ENCODE measurements at regions of chr14 and their contacts with region 1.

Region 1: DNA sequence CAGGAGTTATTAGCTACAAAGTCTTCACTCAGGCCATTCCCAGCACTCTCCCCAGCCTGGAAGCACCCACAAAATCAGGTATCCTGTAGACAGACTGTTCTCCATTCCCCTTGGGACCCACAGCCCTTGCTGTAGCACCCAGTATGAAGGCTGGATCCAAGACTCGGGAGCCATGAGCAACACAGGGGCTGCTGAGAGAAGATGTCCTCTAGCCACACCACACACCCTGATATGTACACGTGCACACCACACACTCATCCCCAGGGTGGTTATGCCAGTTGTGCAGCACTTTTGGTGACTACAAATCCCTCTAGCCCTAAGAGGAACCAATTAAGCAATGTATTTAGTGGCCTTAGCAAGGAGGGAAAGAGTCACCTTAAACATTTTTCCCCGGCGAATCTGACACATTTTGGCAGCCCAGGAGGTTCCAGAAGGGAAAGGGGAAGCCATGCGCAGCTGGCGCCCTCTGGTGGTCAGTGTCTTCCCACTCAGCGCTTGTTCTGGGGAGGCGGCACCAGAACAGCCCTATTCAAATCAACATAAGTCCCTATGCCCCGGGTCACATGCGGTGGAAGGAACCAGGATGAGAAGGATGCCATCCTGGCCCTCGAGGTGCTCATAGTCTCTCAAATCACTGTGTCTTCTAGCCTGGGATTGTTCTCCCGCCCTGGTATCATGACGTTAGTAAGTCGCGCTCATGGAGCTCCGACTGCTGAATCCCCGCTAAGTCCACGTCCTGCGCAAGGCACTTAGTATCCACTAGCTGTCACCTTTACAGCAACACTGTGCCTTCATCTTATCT is 96.9 kb downstream of the GCH1 start:
- DNase-seq: peak; percentile 93
- ATAC-seq: peak; percentile 85
- H3K4me3 Mint-ChIP-seq: no peak overlapping the region
- H3K27ac Mint-ChIP-seq: no peak overlapping the region
- H3K4me1 Mint-ChIP-seq: peaks cover 21% of the 10 kb centered on the region
- H3K27me3 Mint-ChIP-seq: peaks cover 9% of the 10 kb centered on the region
- CTCF ChIP-seq: peak; percentile 95

Region 2: DNA sequence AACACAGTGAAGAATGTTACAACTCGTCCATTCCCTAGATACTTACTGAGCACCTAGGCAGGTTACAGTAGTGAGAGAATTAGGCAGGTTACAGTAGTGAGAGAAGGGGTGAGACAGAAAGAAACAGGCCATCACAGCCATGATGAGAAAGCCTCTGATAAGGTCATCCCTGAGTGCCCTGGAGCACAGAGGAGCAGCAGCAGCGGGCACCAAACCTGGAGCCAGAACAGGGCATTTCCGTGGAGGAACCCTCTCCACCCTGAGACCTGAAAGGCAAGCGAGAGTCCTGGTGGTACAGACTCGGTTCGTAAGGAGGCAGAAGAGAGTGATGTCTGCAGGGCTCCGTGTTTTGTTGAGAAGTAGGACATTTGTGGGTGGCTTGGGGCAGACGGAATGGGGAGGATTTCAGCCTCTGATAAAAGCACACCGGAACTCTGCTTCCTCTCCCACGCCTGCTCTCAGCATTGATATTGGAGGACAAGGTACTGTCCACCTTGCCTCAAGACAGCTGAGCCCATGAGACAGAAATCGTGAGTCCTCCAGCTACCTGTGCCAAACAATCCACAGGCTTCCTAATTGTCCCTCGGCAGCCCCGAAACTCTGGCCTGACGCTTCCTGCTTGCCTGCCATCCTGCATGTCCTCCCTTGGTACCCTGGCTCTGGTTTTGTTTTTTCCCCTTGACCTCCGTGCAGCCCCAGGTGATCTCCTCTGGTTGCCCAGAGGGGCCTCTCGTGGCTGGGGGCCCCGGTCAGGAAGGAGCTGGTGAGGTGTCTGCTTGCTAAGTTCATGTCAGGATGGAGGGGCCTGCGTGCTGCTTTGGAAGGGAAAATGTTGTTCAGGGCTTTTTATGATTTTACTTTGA is 39.2 kb before region 1 on chr14:
- CTCF ChIA-PET with region 1: no interaction called
- POLR2A ChIA-PET with region 1: no interaction called
- DNase-seq: no peak
- ATAC-seq: no peak
- H3K4me3 Mint-ChIP-seq: no peak overlapping the region
- H3K27ac Mint-ChIP-seq: no peak overlapping the region
- H3K4me1 Mint-ChIP-seq: no peaks in the 10 kb centered on the region
- H3K27me3 Mint-ChIP-seq: no peaks in the 10 kb centered on the region
- CTCF ChIP-seq: no peak

Region 3: DNA sequence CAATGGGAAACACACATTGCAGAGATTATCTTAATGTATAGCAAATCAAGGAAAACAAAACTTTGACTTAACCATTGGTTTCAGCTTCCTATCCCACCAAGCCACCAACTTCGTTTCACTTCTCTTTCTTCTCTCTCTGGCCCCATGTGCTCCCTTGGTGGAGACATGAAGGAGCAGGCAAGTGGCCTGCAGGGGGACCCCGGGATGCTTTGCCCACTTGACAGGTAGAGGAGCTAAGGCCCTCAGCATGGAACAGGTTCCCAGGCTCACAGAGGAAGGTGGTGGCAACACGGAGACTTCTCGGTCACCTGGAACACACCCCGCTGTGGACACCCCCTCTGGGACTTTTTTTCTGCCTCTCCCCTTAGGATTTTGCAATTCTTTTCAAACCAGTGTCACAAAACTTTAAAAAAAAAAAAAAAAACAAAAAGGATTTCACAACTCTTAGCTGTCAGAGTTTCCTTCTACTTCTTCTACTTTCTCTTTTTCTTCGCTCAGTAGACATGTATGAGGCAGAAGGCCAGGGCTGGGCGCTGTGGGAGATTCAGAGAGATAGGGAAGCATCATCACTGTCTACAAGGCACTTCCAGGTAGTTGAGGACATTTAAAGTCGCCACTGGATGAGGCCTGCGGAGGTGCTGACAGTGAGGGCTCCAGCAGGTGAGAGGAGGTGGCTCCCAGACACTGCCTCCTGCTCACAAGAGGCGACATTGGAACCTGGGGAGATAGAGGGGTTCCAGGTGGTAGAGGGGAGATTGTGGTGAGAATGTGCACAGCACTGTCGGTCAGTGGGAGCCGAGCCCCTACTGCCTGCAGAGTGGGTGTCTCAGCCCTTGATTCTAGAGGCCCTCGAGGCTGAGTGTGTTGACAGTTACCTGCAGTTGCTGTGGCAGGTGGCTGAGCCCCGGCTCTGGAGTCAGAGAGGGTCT is 22.7 kb before region 1 on chr14:
- CTCF ChIA-PET with region 1: interaction called, 51 read pairs
- POLR2A ChIA-PET with region 1: interaction called, 3 read pairs
- DNase-seq: peak; percentile 51
- ATAC-seq: peak; percentile 82
- H3K4me3 Mint-ChIP-seq: no peak overlapping the region
- H3K27ac Mint-ChIP-seq: no peak overlapping the region
- H3K4me1 Mint-ChIP-seq: peaks cover 8% of the 10 kb centered on the region
- H3K27me3 Mint-ChIP-seq: no peaks in the 10 kb centered on the region
- CTCF ChIP-seq: no peak

Region 4: DNA sequence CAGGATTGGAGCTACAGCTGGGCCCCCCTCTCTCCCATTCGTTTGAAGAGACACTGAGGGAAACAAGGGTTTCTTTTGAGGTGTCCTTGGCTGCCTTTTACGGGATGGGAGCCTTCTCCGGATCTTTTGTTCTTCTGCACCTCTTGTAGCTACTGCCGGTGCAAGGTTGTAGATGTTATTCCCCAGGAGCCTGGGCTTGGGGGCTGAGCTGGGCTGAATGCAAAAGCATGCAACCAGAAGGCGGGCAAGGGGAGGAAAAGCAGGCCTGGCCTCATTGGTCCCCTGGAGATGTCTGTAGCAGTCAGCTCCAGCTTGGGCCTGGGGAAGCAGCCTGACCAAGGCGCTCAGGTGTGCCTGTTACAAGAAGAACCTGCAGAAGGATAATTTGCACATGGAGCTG is 13.4 kb before region 1 on chr14:
- CTCF ChIA-PET with region 1: interaction called, 13 read pairs
- POLR2A ChIA-PET with region 1: no interaction called
- DNase-seq: no peak
- ATAC-seq: peak; percentile 89
- H3K4me3 Mint-ChIP-seq: no peak overlapping the region
- H3K27ac Mint-ChIP-seq: no peak overlapping the region; the same call in 1 of the 2 replicates
- H3K4me1 Mint-ChIP-seq: peaks cover 14% of the 10 kb centered on the region
- H3K27me3 Mint-ChIP-seq: no peaks in the 10 kb centered on the region; the same call in 1 of the 2 replicates
- CTCF ChIP-seq: no peak